ENCODE measurements at regions of chr2 and their contacts with region 1.

Region 1: DNA sequence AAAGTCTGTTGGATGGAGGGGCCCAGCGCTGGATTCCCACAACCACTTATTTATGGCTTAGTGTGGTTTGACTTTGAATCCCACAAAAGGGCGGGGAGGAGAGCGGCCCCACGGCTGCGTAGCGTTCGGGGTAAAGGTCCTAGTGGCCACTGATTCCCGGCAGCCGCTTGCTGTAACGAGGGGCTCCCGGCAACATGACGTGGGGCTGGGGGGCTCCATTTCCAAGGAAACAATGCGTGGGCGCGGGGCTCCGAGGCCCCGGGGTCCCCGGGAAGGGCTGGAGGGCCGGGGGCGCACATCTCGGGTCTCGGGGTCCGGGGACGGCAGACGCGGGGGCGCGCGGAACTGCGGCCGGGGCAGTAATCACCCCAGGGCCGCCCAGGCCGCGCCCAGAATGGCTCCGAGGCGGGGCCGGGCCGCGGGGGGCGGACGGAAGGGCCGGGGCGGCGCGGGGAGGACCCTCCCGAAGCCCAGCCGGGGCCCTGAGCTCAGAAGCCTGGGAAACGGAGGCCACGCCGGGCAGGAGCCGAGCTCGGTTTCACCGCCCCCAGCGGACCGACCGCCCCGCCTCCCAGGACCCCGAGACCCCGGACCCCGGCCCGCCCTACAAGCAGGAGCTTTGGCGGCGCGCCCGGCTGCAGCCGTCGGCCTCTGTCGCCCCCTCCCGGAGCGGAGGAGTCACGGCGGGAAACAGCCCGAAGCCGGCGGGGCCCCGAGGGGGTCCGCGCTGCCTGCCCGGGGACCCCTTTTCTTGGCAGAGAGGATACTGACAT is 11.9 kb upstream of the MLPH start:
- DNase-seq: peak; percentile 66
- ATAC-seq: peak; percentile 66
- H3K4me3 ChIP-seq: peak overlapping the region; percentile 70
- H3K27ac ChIP-seq: peak overlapping the region; percentile 96
- H3K4me1 ChIP-seq: peaks cover 27% of the 10 kb centered on the region
- H3K27me3 ChIP-seq: no peaks in the 10 kb centered on the region
- CTCF ChIP-seq: peak; percentile 86

Region 2: GRCh38 chr2:237383991-237384671 is 91.0 kb before region 1 on chr2:
- CTCF ChIA-PET with region 1: no interaction called
- POLR2A ChIA-PET with region 1: no interaction called
- intact Hi-C with region 1: no loop called
- DNase-seq: no peak
- ATAC-seq: no peak
- H3K4me3 ChIP-seq: no peak overlapping the region
- H3K27ac ChIP-seq: no peak overlapping the region
- H3K4me1 ChIP-seq: no peaks in the 10 kb centered on the region
- H3K27me3 ChIP-seq: no peaks in the 10 kb centered on the region
- CTCF ChIP-seq: no peak

Region 3: GRCh38 chr2:237421542-237422116 is 53.5 kb before region 1 on chr2:
- CTCF ChIA-PET with region 1: interaction called, 14 read pairs
- POLR2A ChIA-PET with region 1: no interaction called
- intact Hi-C with region 1: loop called (anchors 1 kb)
- DNase-seq: peak; percentile 88
- ATAC-seq: peak; percentile 93
- H3K4me3 ChIP-seq: no peak overlapping the region
- H3K27ac ChIP-seq: peak overlapping the region; percentile 51
- H3K4me1 ChIP-seq: peaks cover 10% of the 10 kb centered on the region
- H3K27me3 ChIP-seq: no peaks in the 10 kb centered on the region
- CTCF ChIP-seq: peak; percentile 90

Region 4: DNA sequence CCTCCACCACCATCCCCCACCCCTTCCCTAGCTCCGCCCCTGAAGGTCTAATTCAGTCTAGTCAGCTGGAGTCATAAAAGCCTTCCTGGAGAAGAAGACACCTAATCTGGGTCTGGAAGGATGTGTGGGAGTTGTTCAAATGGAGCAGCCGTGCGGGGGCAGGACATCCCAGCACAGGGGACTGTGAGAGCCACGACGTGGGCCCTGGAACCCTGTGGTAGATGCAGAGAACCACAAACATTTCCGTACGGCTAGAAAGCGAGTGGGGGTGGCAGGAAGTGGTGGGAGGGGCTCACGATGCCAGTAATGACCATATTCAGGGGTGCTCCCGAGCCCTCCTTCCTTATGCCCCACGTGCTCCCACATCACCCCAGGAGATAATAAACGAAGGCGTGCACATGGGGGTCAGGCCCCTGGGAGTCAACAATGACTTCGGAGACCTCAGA is 40.2 kb before region 1 on chr2:
- CTCF ChIA-PET with region 1: interaction called, 4 read pairs
- POLR2A ChIA-PET with region 1: interaction called, 8 read pairs
- intact Hi-C with region 1: loop called (anchors 2 kb)
- DNase-seq: peak; percentile 72
- ATAC-seq: peak; percentile 7
- H3K4me3 ChIP-seq: peak overlapping the region; percentile 61
- H3K27ac ChIP-seq: peak overlapping the region; percentile 100
- H3K4me1 ChIP-seq: peaks cover 68% of the 10 kb centered on the region
- H3K27me3 ChIP-seq: no peaks in the 10 kb centered on the region
- CTCF ChIP-seq: no peak

Region 5: GRCh38 chr2:237444071-237444782 is 30.9 kb before region 1 on chr2:
- CTCF ChIA-PET with region 1: interaction called, 10 read pairs
- POLR2A ChIA-PET with region 1: no interaction called
- intact Hi-C with region 1: no loop called
- DNase-seq: no peak
- ATAC-seq: no peak
- H3K4me3 ChIP-seq: no peak overlapping the region
- H3K27ac ChIP-seq: no peak overlapping the region
- H3K4me1 ChIP-seq: peaks cover 11% of the 10 kb centered on the region; the same call in 1 of the 2 replicates
- H3K27me3 ChIP-seq: no peaks in the 10 kb centered on the region
- CTCF ChIP-seq: no peak

Region 6: DNA sequence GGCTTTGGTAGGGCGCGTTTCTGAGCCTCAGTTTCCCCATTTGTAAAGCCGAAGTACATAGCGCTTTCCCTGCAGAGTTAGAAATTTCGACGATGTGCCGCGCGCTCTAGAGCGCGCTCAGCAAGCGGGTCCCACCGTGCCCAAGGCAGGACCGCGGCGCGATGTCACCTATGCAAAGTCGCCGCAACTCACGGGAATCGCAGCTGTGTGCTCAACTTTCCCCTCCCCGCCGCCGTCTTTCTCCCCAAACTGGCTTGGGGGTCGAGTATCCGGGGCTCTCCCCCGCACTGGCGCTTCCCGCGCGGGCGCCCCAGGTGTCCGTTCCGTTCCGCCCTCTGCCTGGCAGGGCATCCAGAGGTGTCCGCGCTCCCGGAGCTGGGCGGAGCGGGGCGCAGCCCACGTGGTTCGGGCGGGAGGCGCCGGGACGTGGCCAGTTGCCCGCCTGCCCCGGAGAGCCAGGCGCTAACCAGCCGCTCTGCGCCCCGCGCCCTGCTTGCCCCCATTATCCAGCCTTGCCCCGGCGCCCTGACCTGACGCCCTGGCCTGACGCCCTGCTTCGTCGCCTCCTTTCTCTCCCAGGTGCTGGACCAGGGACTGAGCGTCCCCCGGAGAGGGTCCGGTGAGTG is 11.8 kb after region 1 on chr2 and contains the start of gene MLPH:
- CTCF ChIA-PET with region 1: interaction called, 4 read pairs
- POLR2A ChIA-PET with region 1: interaction called, 4 read pairs
- intact Hi-C with region 1: loop called (anchors 2 kb)
- DNase-seq: peak; percentile 80
- ATAC-seq: peak; percentile 30
- H3K4me3 ChIP-seq: peak within 1 kb of the TSS; percentile 92
- H3K27ac ChIP-seq: peak within 1 kb of the TSS; percentile 98
- H3K4me1 ChIP-seq: peaks cover 78% of the 10 kb centered on the region
- H3K27me3 ChIP-seq: no peaks in the 10 kb centered on the region
- CTCF ChIP-seq: no peak
- total RNA-seq, gene MLPH: 201 and 270 TPM in 2 replicates

Region 7: DNA sequence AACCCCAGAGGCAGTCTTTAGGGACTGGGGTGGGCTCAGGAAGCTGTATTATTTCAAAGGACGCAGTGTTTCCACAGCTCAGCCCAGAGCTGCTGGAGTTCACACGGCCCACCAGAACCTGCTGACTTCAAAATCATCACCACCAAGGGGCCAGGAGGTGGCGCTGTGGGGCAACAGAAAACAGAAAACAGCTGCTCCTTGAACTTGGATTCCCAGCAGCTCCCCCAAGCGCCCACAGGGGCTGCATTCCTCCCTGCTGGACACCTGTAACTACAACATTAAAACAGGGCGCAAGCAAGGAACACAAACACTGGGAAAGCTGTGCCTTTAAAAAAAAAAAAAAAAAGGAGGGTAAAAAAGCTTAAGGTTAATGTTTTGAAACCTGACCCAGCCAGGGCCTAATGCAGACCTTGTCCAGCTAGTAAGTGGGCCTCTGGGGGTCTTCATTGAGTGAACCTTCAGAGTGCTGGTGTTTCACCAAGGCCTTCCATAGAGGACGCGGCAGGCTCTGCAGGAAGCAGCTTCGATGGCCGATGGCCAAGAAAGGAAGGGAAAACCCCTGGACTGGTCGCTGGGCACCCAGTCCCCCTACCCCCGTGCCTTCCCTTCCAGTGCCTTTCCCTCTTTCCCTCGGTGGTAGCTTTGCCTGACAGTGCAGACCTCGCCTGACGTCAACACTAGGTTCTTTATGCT is 37.8 kb after region 1 on chr2:
- CTCF ChIA-PET with region 1: interaction called, 6 read pairs
- POLR2A ChIA-PET with region 1: no interaction called
- intact Hi-C with region 1: loop called (anchors 5 kb)
- DNase-seq: peak; percentile 78
- ATAC-seq: peak; percentile 61
- H3K4me3 ChIP-seq: no peak overlapping the region
- H3K27ac ChIP-seq: peak overlapping the region; percentile 49
- H3K4me1 ChIP-seq: no peaks in the 10 kb centered on the region
- H3K27me3 ChIP-seq: no peaks in the 10 kb centered on the region
- CTCF ChIP-seq: peak; percentile 94

Region 8: GRCh38 chr2:237572021-237572741 is 97.1 kb after region 1 on chr2:
- CTCF ChIA-PET with region 1: interaction called, 9 read pairs
- POLR2A ChIA-PET with region 1: no interaction called
- intact Hi-C with region 1: loop called (anchors 1 kb)
- DNase-seq: peak; percentile 87
- ATAC-seq: peak; percentile 81
- H3K4me3 ChIP-seq: peak overlapping the region; percentile 32; the same call in 1 of the 2 replicates
- H3K27ac ChIP-seq: no peak overlapping the region
- H3K4me1 ChIP-seq: peaks cover 25% of the 10 kb centered on the region
- H3K27me3 ChIP-seq: no peaks in the 10 kb centered on the region
- CTCF ChIP-seq: peak; percentile 98